Activated naive CD4-positive, alpha-beta T cell treated with anti-CD3 and anti-CD28 coated beads for 36 hours (primary cell): ENCODE measurements at regions of chr2 and their contacts with region 1.

Region 1: GRCh38 chr2:43226558-43226954 is at the start of gene ZFP36L2:
- DNase-seq: peak; percentile 95
- H3K4me3 Mint-ChIP-seq: peak within 1 kb of the TSS; percentile 97
- H3K27ac Mint-ChIP-seq: peak within 1 kb of the TSS; percentile 92
- H3K4me1 Mint-ChIP-seq: peaks cover 36% of the 10 kb centered on the region
- H3K27me3 Mint-ChIP-seq: no peaks in the 10 kb centered on the region
- total RNA-seq, gene ZFP36L2: 37.3 to 38.4 TPM

Region 2: GRCh38 chr2:42810121-42810970 is 416.2 kb before region 1 on chr2:
- CTCF ChIA-PET with region 1: interaction called, 6 read pairs
- intact Hi-C with region 1: loop called (anchors 1 kb)
- DNase-seq: peak; percentile 96
- H3K4me3 Mint-ChIP-seq: peak overlapping the region; percentile 88
- H3K27ac Mint-ChIP-seq: peak overlapping the region; percentile 93
- H3K4me1 Mint-ChIP-seq: peaks cover 11% of the 10 kb centered on the region
- H3K27me3 Mint-ChIP-seq: no peaks in the 10 kb centered on the region

Region 3: DNA sequence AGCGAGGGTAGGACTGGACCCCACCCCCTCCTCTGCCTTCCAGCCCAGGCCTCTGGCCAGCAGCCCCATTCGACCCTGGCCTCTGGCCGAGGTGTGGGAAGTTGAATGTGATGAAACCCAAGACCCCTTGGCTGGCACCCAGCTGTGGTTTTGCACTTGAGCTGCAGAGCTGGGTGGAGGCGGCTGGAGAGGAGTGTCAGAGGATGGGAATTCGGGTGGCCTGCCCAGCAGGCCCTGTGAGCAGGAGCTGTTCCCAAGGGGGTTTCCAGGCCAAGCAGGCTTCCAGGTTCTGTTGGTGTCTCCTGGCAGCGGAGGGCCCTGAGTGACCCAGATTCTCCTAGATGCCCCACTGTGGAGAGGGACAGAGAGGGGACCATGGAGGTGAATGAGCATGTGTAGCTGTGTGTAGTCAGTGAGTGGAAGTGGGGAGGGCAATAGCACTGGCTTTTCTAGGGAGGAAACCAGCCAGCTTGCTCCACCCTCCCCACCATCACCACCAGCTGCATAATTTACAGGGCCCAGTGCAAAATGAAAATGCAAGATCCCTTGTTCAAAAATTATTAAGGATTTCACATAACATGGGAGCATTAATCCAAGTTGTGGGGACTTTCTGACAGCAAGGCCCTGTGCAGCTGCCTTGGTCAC is 262.0 kb before region 1 on chr2:
- CTCF ChIA-PET with region 1: interaction called, 13 read pairs
- intact Hi-C with region 1: no loop called
- DNase-seq: no peak
- H3K4me3 Mint-ChIP-seq: no peak overlapping the region
- H3K27ac Mint-ChIP-seq: no peak overlapping the region
- H3K4me1 Mint-ChIP-seq: peaks cover 15% of the 10 kb centered on the region
- H3K27me3 Mint-ChIP-seq: peaks cover 11% of the 10 kb centered on the region

Region 4: GRCh38 chr2:43059183-43059897 is 167.2 kb before region 1 on chr2:
- CTCF ChIA-PET with region 1: interaction called, 6 read pairs
- intact Hi-C with region 1: loop called (anchors 1 kb)
- DNase-seq: peak; percentile 85
- H3K4me3 Mint-ChIP-seq: peak overlapping the region; percentile 1
- H3K27ac Mint-ChIP-seq: peak overlapping the region; percentile 62
- H3K4me1 Mint-ChIP-seq: peaks cover 26% of the 10 kb centered on the region
- H3K27me3 Mint-ChIP-seq: no peaks in the 10 kb centered on the region

Region 5: DNA sequence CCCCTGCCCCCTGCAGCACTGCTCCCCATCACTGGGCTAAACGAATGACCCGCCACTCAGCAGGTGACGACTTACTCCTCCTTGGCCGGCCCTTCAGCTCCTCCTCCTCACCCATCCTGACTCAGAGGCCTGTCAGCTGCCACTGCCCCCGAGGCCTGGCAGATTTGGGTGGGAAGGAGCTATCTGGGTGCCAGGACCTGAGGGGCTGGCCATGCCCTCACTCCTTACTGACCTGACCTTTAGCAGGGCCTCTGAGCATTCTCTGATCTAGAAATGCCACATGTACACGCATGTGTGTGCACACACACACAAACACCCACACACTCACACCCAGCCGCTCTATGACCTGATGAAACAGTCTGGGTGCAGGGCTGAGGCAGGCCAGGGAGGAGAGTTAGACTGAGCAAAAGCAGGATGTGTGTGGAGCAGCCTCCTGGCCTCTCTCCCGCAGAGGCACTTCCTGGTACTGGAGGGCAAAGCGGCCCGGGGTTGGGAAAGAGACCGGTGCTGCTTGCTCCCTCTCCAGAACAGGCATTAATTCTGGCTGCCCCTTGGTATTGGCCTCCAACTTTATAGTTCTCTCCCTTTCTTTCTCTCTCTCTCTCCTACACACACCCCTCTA is 68.2 kb before region 1 on chr2:
- CTCF ChIA-PET with region 1: interaction called, 8 read pairs
- intact Hi-C with region 1: loop called (anchors 1 kb)
- DNase-seq: peak; percentile 79
- H3K4me3 Mint-ChIP-seq: peak overlapping the region; percentile 77
- H3K27ac Mint-ChIP-seq: peak overlapping the region; percentile 99
- H3K4me1 Mint-ChIP-seq: peaks cover 72% of the 10 kb centered on the region
- H3K27me3 Mint-ChIP-seq: no peaks in the 10 kb centered on the region

Region 6: GRCh38 chr2:43199492-43200481 is 26.8 kb before region 1 on chr2:
- CTCF ChIA-PET with region 1: interaction called, 22 read pairs
- intact Hi-C with region 1: loop called (anchors 1 kb)
- DNase-seq: no peak
- H3K4me3 Mint-ChIP-seq: no peak overlapping the region
- H3K27ac Mint-ChIP-seq: no peak overlapping the region
- H3K4me1 Mint-ChIP-seq: peaks cover 48% of the 10 kb centered on the region
- H3K27me3 Mint-ChIP-seq: no peaks in the 10 kb centered on the region

Region 7: DNA sequence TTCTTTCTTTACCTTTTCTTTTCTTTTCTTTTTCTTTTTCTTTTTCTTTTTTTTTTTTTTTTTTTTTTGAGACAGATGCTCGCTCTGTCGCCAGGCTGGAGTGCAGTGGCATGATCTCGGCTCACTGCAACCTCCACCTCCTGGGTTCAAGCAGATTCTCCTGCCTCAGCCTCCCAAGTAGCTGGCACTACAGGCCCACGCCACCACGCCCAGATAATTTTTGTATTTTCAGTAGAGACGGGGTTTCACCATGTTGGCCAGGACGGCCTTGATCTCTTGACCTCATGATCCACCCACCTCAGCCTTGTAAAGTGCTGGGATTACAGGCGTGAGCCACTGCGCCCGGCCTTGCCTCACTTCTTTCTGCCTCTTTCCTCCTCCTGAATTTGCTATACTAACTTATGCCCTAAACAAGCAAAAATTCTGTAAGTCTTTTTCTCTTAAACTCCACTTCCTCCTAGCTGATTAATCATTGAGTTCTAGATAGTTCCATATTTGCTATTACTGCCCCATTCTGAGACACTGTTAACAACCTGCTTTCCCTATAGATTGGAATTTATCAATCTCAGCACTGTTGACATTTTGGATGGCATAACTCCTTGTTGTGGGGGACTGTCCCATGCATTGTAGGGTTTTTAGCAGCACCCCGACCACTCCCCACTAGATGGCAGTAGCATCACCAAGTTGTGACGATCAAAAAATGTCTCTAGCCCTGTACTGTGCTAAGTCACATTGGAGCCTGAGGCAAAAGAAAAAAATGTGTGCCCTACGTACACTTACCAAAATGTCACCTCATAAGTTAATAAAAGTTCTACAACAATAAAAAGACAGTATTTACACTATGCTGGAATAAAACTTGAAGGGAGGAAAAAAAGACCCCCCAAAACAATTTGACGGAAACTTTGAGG is 385.7 kb after region 1 on chr2:
- CTCF ChIA-PET with region 1: no interaction called
- intact Hi-C with region 1: loop called (anchors 1 kb)
- DNase-seq: peak; percentile 91
- H3K4me3 Mint-ChIP-seq: no peak overlapping the region
- H3K27ac Mint-ChIP-seq: no peak overlapping the region
- H3K4me1 Mint-ChIP-seq: no peaks in the 10 kb centered on the region
- H3K27me3 Mint-ChIP-seq: peaks cover 3% of the 10 kb centered on the region